ENCODE measurements at regions of chr20 and their contacts with region 1.

Region 1: DNA sequence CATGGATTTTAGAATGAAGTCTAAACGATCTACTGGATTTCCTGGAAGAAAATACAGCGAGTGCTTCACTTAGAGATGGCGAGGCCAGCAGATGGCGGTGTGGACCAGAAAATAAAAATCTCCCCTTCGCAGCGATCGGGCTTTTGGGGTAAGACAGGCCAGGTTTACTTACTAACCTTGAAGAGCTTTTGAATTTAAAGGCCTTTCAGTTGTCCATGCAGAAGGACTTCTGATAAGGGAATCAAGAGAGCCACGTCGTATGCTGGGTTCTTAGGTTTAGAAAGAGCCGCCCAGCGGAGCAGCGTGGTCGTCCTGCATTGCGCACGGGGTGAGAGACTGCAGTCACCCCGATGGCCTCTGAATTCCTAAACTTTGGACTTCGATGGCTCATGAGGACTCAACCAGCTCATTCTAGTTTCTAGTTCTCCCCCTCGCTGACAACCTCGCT is 125.2 kb upstream of the RALGAPA2 start:
- DNase-seq: peak; percentile 35
- ATAC-seq: peak; percentile 87
- H3K4me3 ChIP-seq: no peak overlapping the region
- H3K27ac ChIP-seq: no peak overlapping the region
- H3K4me1 ChIP-seq: no peaks in the 10 kb centered on the region
- H3K27me3 ChIP-seq: 0 out of 2 replicates have a peak, but pooled peaks cover 2% of the 10 kb centered on the region
- CTCF ChIP-seq: peak; percentile 70
- POLR2A ChIP-seq: no peak
- RAD21 ChIP-seq: peak; percentile 65

Region 2: DNA sequence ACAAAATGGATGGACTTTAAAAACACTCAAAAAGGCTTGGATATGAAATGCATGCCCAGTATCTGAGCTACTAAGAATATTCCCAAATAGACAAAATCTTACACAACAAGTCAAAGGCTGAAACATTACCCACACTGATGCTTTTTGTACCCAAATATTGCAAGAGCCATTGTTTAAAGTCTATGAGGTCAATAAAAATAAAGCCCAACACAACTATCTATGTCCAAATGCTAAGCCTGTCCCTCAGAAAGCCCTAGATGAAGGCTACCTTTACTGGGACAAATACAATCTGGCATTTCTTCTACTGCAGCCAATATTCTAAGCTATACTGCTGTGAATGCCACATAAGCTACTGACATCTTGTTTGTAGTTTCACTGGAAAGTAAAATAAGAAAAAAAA is 179.5 kb before region 1 on chr20:
- CTCF ChIA-PET with region 1: no interaction called
- POLR2A ChIA-PET with region 1: no interaction called
- dilution Hi-C with region 1: no loop called
- in situ Hi-C with region 1: no loop called
- intact Hi-C with region 1: no loop called
- DNase-seq: no peak
- ATAC-seq: no peak
- H3K4me3 ChIP-seq: no peak overlapping the region
- H3K27ac ChIP-seq: no peak overlapping the region
- H3K4me1 ChIP-seq: no peaks in the 10 kb centered on the region
- H3K27me3 ChIP-seq: no peaks in the 10 kb centered on the region
- CTCF ChIP-seq: no peak
- POLR2A ChIP-seq: no peak
- RAD21 ChIP-seq: no peak

Region 3: GRCh38 chr20:20721369-20721888 is 116.2 kb before region 1 on chr20:
- CTCF ChIA-PET with region 1: no interaction called
- POLR2A ChIA-PET with region 1: no interaction called
- dilution Hi-C with region 1: no loop called
- in situ Hi-C with region 1: no loop called
- intact Hi-C with region 1: no loop called
- DNase-seq: no peak
- ATAC-seq: no peak
- H3K4me3 ChIP-seq: no peak overlapping the region
- H3K27ac ChIP-seq: no peak overlapping the region
- H3K4me1 ChIP-seq: no peaks in the 10 kb centered on the region
- H3K27me3 ChIP-seq: peaks cover 2% of the 10 kb centered on the region; the same call in 1 of the 2 replicates
- CTCF ChIP-seq: no peak
- POLR2A ChIP-seq: no peak
- RAD21 ChIP-seq: no peak

Region 4: GRCh38 chr20:21505161-21505809 is 667.7 kb after region 1 on chr20:
- CTCF ChIA-PET with region 1: interaction called, 10 read pairs
- POLR2A ChIA-PET with region 1: interaction called, 6 read pairs
- dilution Hi-C with region 1: no loop called
- in situ Hi-C with region 1: loop called (anchors 5 kb)
- intact Hi-C with region 1: loop called (anchors 1 kb)
- DNase-seq: peak; percentile 22
- ATAC-seq: peak; percentile 84
- H3K4me3 ChIP-seq: no peak overlapping the region
- H3K27ac ChIP-seq: no peak overlapping the region
- H3K4me1 ChIP-seq: no peaks in the 10 kb centered on the region; the same call in 1 of the 2 replicates
- H3K27me3 ChIP-seq: peaks cover 61% of the 10 kb centered on the region
- CTCF ChIP-seq: peak; percentile 96
- POLR2A ChIP-seq: peak; percentile 39; the same call in 1 of the 2 replicates
- RAD21 ChIP-seq: peak; percentile 96

Region 5: GRCh38 chr20:21571841-21572690 is 734.5 kb after region 1 on chr20:
- CTCF ChIA-PET with region 1: interaction called, 4 read pairs
- POLR2A ChIA-PET with region 1: no interaction called
- dilution Hi-C with region 1: no loop called
- in situ Hi-C with region 1: no loop called
- intact Hi-C with region 1: loop called (anchors 1 kb)
- DNase-seq: no peak
- ATAC-seq: peak; percentile 61
- H3K4me3 ChIP-seq: no peak overlapping the region
- H3K27ac ChIP-seq: no peak overlapping the region
- H3K4me1 ChIP-seq: no peaks in the 10 kb centered on the region
- H3K27me3 ChIP-seq: no peaks in the 10 kb centered on the region
- CTCF ChIP-seq: peak; percentile 80
- POLR2A ChIP-seq: no peak
- RAD21 ChIP-seq: peak; percentile 57

Region 6: GRCh38 chr20:21615617-21616080 is 778.1 kb after region 1 on chr20:
- CTCF ChIA-PET with region 1: interaction called, 3 read pairs
- POLR2A ChIA-PET with region 1: no interaction called
- dilution Hi-C with region 1: no loop called
- in situ Hi-C with region 1: no loop called
- intact Hi-C with region 1: loop called (anchors 1 kb)
- DNase-seq: peak; percentile 29
- ATAC-seq: peak; percentile 81
- H3K4me3 ChIP-seq: no peak overlapping the region
- H3K27ac ChIP-seq: no peak overlapping the region
- H3K4me1 ChIP-seq: no peaks in the 10 kb centered on the region
- H3K27me3 ChIP-seq: no peaks in the 10 kb centered on the region
- CTCF ChIP-seq: peak; percentile 68
- POLR2A ChIP-seq: no peak
- RAD21 ChIP-seq: peak; percentile 59

Region 7: GRCh38 chr20:22312744-22313346 is 1475.2 kb after region 1 on chr20:
- CTCF ChIA-PET with region 1: no interaction called
- POLR2A ChIA-PET with region 1: no interaction called
- dilution Hi-C with region 1: no loop called
- in situ Hi-C with region 1: no loop called
- intact Hi-C with region 1: loop called (anchors 10 kb)
- DNase-seq: peak; percentile 25
- ATAC-seq: no peak
- H3K4me3 ChIP-seq: no peak overlapping the region
- H3K27ac ChIP-seq: no peak overlapping the region
- H3K4me1 ChIP-seq: no peaks in the 10 kb centered on the region
- H3K27me3 ChIP-seq: no peaks in the 10 kb centered on the region
- CTCF ChIP-seq: peak; percentile 73
- POLR2A ChIP-seq: no peak
- RAD21 ChIP-seq: peak; percentile 59

Measured in IMR-90 (cell line).